Heart left ventricle (tissue), 16 donors: ENCODE measurements at regions of chr18 and their contacts with region 1.

Region 1: DNA sequence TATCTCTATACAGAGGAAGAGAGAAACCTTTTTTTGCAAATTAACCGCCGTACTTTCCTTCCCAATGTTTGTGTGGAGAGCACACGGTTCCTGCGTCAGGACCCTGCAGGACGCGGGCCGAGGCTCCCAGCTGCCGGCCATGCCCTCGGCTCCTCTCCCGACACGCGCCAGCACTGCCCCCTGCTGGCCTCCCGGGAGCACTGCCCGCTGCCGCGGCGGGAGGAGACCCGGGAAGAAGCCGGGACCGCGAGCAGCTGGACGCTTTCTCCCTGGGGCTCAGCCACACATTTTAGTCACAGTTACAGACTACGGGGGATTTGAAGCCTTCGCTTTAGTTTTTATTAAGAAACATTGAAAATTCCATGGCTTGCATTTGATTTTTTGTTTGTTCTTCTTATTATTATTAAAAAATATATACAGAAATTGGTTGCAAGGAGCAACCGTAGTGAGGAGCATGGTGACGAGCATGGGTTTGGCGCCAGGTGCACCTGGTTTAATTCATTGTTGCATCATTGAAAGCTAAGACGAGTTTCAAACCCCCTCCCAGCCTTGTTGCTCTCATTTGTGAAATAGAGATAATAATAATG is 401.2 kb downstream of the GALR1 start:
- DNase-seq: peak; percentile 71 to 89 (median 74)
- ATAC-seq: peak; percentile 65 to 98 (median 91)
- H3K4me3 ChIP-seq: peak overlapping the region in 1 of 12 donors; percentile 2
- H3K27ac ChIP-seq: no peak overlapping the region
- H3K4me1 ChIP-seq: peaks cover 0 to 8% (median 0%) of the 10 kb centered on the region in 12 donors
- H3K27me3 ChIP-seq: peaks cover 0 to 18% (median 4%) of the 10 kb centered on the region in 9 donors
- CTCF ChIP-seq: peak; percentile 75 to 95 (median 88)
- POLR2A ChIP-seq: no peak

Region 2: DNA sequence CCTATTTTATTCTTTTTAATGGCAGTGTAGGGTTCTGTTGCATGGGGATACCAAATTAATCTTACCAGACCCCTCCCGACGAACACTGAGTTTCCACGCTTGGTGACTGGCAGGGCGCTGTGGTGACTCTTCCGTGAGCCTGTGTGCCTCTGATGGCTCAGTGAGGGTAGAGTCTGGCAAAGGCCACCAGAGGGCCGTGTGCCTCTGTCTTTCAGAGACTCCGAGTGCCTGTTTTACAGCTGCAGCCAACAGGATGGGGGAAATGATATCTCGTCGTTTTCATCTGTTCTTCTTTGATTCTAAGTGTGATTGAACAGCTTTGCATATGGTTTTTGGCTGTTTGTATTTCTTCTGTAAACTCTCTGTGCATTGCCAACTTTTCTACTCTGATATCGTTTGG is 728.8 kb before region 1 on chr18:
- intact Hi-C with region 1: loop called in 2 of 10 experiments (anchors 5 kb)
- DNase-seq: peak in 3 of 5 donors; percentile 32 to 62 (median 43)
- ATAC-seq: peak; percentile 83 to 93 (median 92)
- H3K4me3 ChIP-seq: no peak overlapping the region
- H3K27ac ChIP-seq: no peak overlapping the region
- H3K4me1 ChIP-seq: no peaks in the 10 kb centered on the region
- H3K27me3 ChIP-seq: no peaks in the 10 kb centered on the region
- CTCF ChIP-seq: peak; percentile 21 to 64 (median 46)
- POLR2A ChIP-seq: no peak

Region 3: GRCh38 chr18:77000527-77000926 is 650.4 kb before region 1 on chr18:
- intact Hi-C with region 1: loop called in 2 of 10 experiments (anchors 5 to 10 kb)
- DNase-seq: peak in 3 of 5 donors; percentile 50 to 64 (median 52)
- ATAC-seq: no peak
- H3K4me3 ChIP-seq: peak overlapping the region in 7 of 12 donors; percentile 6 to 49 (median 29)
- H3K27ac ChIP-seq: peak overlapping the region in 2 of 12 donors; percentile 27 to 35
- H3K4me1 ChIP-seq: peaks cover 0 to 29% (median 0%) of the 10 kb centered on the region in 12 donors
- H3K27me3 ChIP-seq: no peaks in the 10 kb centered on the region
- CTCF ChIP-seq: peak; percentile 87 to 99 (median 96)
- POLR2A ChIP-seq: no peak

Region 4: DNA sequence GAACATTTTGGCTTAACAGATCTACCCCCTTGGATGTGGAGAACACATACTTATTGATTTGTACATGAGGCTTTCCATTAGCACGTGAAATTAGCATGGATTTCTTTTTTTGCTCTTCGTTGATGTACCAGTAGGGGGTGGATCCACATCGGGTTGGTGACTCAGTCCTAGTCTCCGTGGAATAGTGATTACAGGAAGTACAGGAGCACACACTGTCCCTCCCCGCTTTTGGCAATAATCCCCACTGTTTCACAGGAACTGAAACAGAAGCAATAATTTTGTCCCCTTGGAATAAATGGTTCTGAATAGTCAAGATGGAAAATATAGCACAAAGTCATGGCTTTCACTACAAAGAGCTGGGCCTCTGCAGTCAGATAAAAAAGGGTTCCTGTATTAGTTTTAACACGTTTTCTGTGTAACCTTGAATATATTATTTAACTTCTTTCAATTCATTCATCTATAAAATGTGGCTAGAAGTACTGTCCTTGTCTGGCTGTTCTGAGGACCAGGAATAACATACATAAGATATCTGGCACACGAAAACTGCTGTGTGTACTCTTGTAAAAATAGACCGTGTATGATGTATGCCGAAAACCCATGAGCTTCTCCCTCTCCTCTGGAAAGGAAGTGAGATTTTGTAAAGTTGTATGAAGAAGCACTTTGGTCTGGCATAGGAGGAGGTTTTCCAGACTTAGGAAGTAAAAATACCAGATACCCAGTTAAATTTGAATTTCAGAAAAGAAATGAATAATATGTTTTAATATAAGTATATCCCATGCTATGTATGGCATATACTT is 172.0 kb before region 1 on chr18:
- intact Hi-C with region 1: loop called in 1 of 10 experiments (anchors 10 kb)
- DNase-seq: peak in 4 of 5 donors; percentile 50 to 76 (median 59)
- ATAC-seq: peak; percentile 88 to 97 (median 94)
- H3K4me3 ChIP-seq: no peak overlapping the region
- H3K27ac ChIP-seq: peak overlapping the region in 11 of 12 donors; percentile 15 to 68 (median 51)
- H3K4me1 ChIP-seq: peaks cover 0 to 7% (median 0%) of the 10 kb centered on the region in 12 donors
- H3K27me3 ChIP-seq: peaks cover 0 to 8% (median 0%) of the 10 kb centered on the region in 9 donors
- CTCF ChIP-seq: peak in 7 of 12 donors; percentile 9 to 42 (median 37)
- POLR2A ChIP-seq: no peak

Region 5: DNA sequence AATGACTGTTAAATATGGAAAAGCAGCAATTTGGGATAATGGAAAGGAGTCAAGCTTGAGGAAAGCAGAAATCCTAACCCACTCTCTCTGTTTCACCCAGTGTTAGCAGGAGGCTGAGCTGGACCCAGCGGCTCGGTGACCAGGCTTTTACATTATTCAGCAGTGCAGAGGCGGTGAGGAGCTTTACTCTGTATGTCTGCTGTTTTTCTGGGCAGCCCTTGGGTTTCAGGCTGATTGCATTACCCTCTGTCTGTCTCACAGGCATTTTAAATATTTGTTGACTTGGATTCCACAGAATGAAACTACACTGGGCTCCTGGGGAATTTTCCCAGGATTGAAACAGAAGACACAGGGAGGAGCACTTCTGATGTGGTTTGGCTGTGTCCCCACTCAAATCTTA is 33.2 kb before region 1 on chr18:
- intact Hi-C with region 1: no loop called
- DNase-seq: no peak
- ATAC-seq: peak in 1 of 4 donors; percentile 51
- H3K4me3 ChIP-seq: no peak overlapping the region
- H3K27ac ChIP-seq: no peak overlapping the region
- H3K4me1 ChIP-seq: peaks cover 0 to 6% (median 0%) of the 10 kb centered on the region in 12 donors
- H3K27me3 ChIP-seq: no peaks in the 10 kb centered on the region
- CTCF ChIP-seq: no peak
- POLR2A ChIP-seq: no peak